ENCODE measurements at regions of chr20 and their contacts with region 1.

Region 1: DNA sequence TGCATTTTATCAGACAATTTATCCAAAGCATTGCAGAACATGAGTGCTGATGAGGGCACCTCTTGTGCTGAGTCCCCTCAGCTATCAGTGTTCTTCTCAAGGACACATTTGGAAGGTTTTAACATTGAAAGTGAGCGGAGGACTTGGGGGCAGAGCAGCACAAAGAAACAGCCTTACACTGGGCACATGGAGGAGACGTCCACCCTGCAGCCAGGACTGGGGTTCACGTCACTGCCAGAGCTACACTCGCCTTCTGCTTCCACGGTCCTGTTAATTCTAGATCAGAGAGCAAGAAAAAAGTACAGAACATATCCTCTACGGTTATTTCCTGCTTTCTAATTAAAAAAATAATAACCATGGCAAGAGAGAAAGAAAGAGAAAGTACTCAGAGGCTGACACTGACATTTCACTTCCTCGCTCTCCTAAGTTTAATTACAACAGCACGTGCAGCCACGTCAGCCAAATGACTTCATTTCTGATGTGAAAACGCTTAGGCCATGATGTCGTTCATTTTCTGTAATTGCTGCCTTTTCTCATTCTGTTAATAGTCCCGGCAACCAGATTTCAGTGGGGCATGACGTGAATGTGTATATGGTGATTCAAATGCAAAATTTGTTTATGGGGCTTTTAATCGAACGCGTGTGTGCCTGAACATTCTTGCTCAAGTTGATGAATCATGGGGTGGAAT is 5.1 kb downstream of the PRND start:
- DNase-seq: peak in 2 of 4 donors; percentile 33 to 49
- ATAC-seq: peak; percentile 45
- H3K4me3 ChIP-seq: peak overlapping the region in 1 of 2 donors; percentile 7
- H3K27ac ChIP-seq: peak overlapping the region in 1 of 2 donors; percentile 45
- H3K4me1 ChIP-seq: peaks cover 2 to 12% of the 10 kb centered on the region in 2 donors
- H3K27me3 ChIP-seq: no peaks in the 10 kb centered on the region
- CTCF ChIP-seq: no peak

Region 2: DNA sequence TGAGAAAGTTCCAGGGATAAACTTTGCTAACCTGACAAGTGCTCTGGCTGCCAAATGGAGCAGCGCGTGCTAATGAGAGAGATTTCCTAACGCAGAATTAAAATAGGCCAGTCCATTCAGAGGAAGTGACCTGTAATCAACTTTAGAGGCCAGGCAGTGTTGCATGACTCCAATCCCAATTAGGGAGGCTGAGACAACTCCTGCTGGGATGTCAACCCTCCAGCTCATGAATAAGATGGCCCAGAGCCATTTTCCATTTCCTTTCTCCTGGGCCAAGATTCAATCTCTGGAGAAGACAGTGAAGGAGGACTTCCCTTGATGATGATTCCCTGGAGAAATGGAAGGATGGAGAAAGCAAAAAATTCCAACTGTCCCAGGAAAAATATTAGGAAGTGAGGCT is 470.0 kb before region 1 on chr20:
- intact Hi-C with region 1: loop called in 1 of 2 experiments (anchors 5 kb)
- DNase-seq: no peak
- ATAC-seq: no peak
- H3K4me3 ChIP-seq: no peak overlapping the region
- H3K27ac ChIP-seq: no peak overlapping the region
- H3K4me1 ChIP-seq: no peaks in the 10 kb centered on the region
- H3K27me3 ChIP-seq: peaks cover 0 to 5% of the 10 kb centered on the region in 2 donors
- CTCF ChIP-seq: no peak

Region 3: GRCh38 chr20:4490606-4491280 is 236.1 kb before region 1 on chr20:
- intact Hi-C with region 1: no loop called
- DNase-seq: peak in 1 of 4 donors; percentile 28
- ATAC-seq: no peak
- H3K4me3 ChIP-seq: no peak overlapping the region
- H3K27ac ChIP-seq: no peak overlapping the region
- H3K4me1 ChIP-seq: no peaks in the 10 kb centered on the region
- H3K27me3 ChIP-seq: no peaks in the 10 kb centered on the region
- CTCF ChIP-seq: no peak

Region 4: GRCh38 chr20:5268449-5268848 is 541.6 kb after region 1 on chr20:
- intact Hi-C with region 1: no loop called
- DNase-seq: no peak
- ATAC-seq: no peak
- H3K4me3 ChIP-seq: no peak overlapping the region
- H3K27ac ChIP-seq: no peak overlapping the region
- H3K4me1 ChIP-seq: peaks cover 0 to 3% of the 10 kb centered on the region in 2 donors
- H3K27me3 ChIP-seq: no peaks in the 10 kb centered on the region
- CTCF ChIP-seq: no peak

Measured in left lung (tissue), 14 donors.